ENCODE measurements at regions of chr16 and their contacts with region 1.

Region 1: DNA sequence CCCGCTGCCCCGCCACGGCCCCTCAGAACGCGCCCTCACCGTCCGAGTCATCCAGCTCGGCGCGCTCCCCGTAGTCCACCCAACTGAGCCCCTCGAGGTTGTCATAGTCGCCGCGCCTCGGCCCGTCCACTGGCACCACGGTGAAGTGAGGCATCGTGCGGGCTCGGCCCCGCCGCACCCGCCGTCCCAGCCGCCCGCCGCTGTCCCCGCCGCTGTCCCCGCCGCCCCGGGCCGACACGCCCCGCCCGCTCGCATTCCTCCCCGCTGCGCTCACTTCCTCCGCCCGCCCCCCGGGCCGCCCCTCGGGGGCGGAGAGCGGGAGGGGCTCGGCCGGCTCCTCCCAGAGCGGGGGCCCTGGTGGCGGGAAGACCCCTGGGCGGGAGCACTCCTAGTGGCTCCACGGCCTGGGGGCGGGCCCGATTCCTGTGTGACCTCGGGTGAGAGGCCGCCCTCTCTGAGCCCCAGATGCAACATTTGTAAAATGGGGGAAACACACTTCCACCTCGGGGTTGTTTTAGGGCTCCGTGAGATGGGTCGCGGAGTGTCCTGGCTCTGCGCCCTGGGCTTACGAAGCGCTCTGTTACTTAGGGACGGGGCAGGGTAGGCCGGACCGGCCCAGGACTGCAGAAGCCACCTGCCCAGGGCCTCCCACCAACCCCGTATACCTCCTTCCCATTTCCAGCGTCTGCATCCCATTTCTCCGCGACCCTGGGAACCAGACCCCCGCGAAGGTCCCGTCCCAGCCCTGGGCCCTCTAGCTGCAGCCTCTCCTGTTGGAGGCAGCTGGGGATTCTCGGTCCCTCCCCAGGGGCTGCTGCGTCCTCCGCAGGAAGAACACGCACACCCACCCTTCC is at the start of gene SLC12A4:
- DNase-seq: peak; percentile 80 to 90 (median 83)
- H3K4me3 ChIP-seq: peak within 1 kb of the TSS; percentile 84 to 91
- H3K4me3 Mint-ChIP-seq: peak within 1 kb of the TSS; percentile 88 to 99 (median 97)
- H3K27ac ChIP-seq: peak within 1 kb of the TSS; percentile 63
- H3K27ac Mint-ChIP-seq: peak within 1 kb of the TSS; percentile 83 to 98 (median 95)
- H3K4me1 ChIP-seq: peaks cover 17% of the 10 kb centered on the region
- H3K4me1 Mint-ChIP-seq: peaks cover 12 to 39% (median 19%) of the 10 kb centered on the region in 4 donors
- H3K27me3 ChIP-seq: no peaks in the 10 kb centered on the region
- H3K27me3 Mint-ChIP-seq: no peaks in the 10 kb centered on the region
- total RNA-seq, gene SLC12A4: 33.2 to 33.5 TPM

Region 2: DNA sequence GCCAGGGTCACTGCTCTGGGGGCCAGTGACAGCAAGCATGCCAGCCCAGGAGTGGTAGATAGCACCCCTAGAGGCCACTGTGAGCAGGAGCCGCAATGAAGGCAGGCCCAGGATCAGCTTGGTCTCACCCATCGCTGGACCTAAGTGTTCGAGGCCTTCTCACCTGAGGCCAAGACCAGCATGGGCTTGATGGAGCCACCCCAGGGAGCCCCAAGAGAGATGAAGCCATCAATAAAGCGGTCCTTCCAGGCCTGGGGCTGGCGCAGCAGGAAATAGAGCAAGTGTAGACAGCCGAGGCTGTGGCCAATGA is 26.5 kb before region 1 on chr16:
- CTCF ChIA-PET with region 1: interaction called, 5 read pairs
- POLR2A ChIA-PET with region 1: interaction called, 49 read pairs
- intact Hi-C with region 1: loop called (anchors 2 kb)
- DNase-seq: peak in 4 of 5 donors; percentile 17 to 32 (median 22)
- H3K4me3 ChIP-seq: no peak overlapping the region
- H3K4me3 Mint-ChIP-seq: no peak overlapping the region
- H3K27ac ChIP-seq: peak overlapping the region; percentile 9
- H3K27ac Mint-ChIP-seq: peak overlapping the region in 2 of 7 donors; percentile 70 to 79
- H3K4me1 ChIP-seq: peaks cover 39% of the 10 kb centered on the region
- H3K4me1 Mint-ChIP-seq: peaks cover 18 to 33% (median 25%) of the 10 kb centered on the region in 4 donors
- H3K27me3 ChIP-seq: no peaks in the 10 kb centered on the region
- H3K27me3 Mint-ChIP-seq: no peaks in the 10 kb centered on the region

Region 3: DNA sequence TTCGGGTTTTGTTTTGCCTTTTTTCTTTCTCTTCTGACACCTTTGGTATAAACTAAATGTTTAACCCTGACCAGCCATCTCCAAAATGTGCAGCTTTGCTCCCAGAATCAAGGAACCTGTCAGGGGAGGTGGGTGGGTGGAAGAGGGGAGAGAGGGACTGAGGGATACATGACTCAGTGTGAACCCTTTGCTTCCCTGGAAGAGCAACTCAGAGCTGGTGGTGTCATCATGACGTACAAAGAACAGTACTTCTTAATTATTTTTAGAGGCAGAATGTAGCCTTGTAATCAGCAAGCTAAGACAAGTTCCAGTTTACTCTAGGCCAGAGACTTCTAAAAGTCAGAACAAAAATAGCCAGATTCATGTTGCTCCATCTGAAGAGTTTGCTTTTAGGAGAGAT is 1017.2 kb after region 1 on chr16:
- CTCF ChIA-PET with region 1: no interaction called
- POLR2A ChIA-PET with region 1: no interaction called
- intact Hi-C with region 1: no loop called
- DNase-seq: no peak
- H3K4me3 ChIP-seq: no peak overlapping the region
- H3K4me3 Mint-ChIP-seq: no peak overlapping the region
- H3K27ac ChIP-seq: no peak overlapping the region
- H3K27ac Mint-ChIP-seq: no peak overlapping the region
- H3K4me1 ChIP-seq: no peaks in the 10 kb centered on the region
- H3K4me1 Mint-ChIP-seq: no peaks in the 10 kb centered on the region
- H3K27me3 ChIP-seq: no peaks in the 10 kb centered on the region
- H3K27me3 Mint-ChIP-seq: no peaks in the 10 kb centered on the region

Measured in CD4-positive, alpha-beta memory T cell (primary cell).